Activated CD4-positive, alpha-beta memory T cell treated with anti-CD3 and anti-CD28 coated beads for 36 hours (primary cell): ENCODE measurements at regions of chr11 and their contacts with region 1.

Region 1: GRCh38 chr11:57493507-57494503 is 21.7 kb downstream of the SLC43A1 start:
- DNase-seq: peak; percentile 87
- H3K4me3 Mint-ChIP-seq: no peak overlapping the region
- H3K27ac Mint-ChIP-seq: peak overlapping the region; percentile 83
- H3K4me1 Mint-ChIP-seq: peaks cover 9% of the 10 kb centered on the region
- H3K27me3 Mint-ChIP-seq: no peaks in the 10 kb centered on the region

Region 2: GRCh38 chr11:57359896-57360690 is 133.7 kb before region 1 on chr11:
- CTCF ChIA-PET with region 1: interaction called, 11 read pairs
- POLR2A ChIA-PET with region 1: no interaction called
- intact Hi-C with region 1: no loop called
- DNase-seq: no peak
- H3K4me3 Mint-ChIP-seq: no peak overlapping the region
- H3K27ac Mint-ChIP-seq: no peak overlapping the region
- H3K4me1 Mint-ChIP-seq: no peaks in the 10 kb centered on the region
- H3K27me3 Mint-ChIP-seq: peaks cover 11% of the 10 kb centered on the region

Region 3: GRCh38 chr11:57474017-57474802 is 19.6 kb before region 1 on chr11:
- CTCF ChIA-PET with region 1: interaction called, 22 read pairs
- POLR2A ChIA-PET with region 1: no interaction called
- intact Hi-C with region 1: no loop called
- DNase-seq: peak; percentile 53
- H3K4me3 Mint-ChIP-seq: no peak overlapping the region
- H3K27ac Mint-ChIP-seq: peak overlapping the region; percentile 20
- H3K4me1 Mint-ChIP-seq: peaks cover 22% of the 10 kb centered on the region
- H3K27me3 Mint-ChIP-seq: peaks cover 11% of the 10 kb centered on the region

Region 4: DNA sequence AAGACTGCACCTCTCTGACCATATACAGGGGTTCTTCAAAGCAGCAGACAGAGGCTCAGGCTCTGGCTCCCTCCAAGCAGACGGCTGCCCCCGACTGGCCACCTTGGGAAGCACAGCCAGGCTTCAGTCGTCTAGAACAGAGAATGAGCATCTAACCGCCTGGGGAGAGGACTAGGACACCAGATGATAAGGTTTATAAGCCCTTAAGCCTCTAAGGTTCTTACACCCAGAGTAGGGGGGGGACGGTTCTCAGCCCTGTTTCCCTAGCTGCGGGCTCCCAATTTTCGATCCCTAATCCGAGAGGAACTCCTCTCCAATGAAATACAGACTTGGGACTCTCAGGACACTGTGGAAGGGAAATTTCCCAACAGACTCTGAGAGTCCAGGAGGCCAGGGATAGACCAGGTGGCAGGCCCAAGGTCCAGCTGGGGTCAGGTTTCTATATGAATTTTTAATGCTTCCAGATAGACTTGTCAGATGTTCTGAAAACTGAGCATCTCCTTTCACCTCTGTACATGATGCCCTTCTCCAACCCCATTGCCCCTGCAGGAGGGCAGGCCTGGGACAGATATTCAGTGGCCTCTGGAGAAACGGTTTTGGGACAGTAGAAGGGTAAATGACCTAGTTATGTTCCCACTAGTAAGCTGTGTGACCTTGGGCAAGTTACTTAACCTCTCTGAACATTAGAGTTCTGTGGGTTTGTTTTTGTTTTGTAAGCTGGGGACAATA is 13.2 kb before region 1 on chr11:
- CTCF ChIA-PET with region 1: interaction called, 36 read pairs
- POLR2A ChIA-PET with region 1: no interaction called
- intact Hi-C with region 1: no loop called
- DNase-seq: peak; percentile 87
- H3K4me3 Mint-ChIP-seq: no peak overlapping the region
- H3K27ac Mint-ChIP-seq: no peak overlapping the region
- H3K4me1 Mint-ChIP-seq: peaks cover 13% of the 10 kb centered on the region
- H3K27me3 Mint-ChIP-seq: peaks cover 17% of the 10 kb centered on the region

Region 5: DNA sequence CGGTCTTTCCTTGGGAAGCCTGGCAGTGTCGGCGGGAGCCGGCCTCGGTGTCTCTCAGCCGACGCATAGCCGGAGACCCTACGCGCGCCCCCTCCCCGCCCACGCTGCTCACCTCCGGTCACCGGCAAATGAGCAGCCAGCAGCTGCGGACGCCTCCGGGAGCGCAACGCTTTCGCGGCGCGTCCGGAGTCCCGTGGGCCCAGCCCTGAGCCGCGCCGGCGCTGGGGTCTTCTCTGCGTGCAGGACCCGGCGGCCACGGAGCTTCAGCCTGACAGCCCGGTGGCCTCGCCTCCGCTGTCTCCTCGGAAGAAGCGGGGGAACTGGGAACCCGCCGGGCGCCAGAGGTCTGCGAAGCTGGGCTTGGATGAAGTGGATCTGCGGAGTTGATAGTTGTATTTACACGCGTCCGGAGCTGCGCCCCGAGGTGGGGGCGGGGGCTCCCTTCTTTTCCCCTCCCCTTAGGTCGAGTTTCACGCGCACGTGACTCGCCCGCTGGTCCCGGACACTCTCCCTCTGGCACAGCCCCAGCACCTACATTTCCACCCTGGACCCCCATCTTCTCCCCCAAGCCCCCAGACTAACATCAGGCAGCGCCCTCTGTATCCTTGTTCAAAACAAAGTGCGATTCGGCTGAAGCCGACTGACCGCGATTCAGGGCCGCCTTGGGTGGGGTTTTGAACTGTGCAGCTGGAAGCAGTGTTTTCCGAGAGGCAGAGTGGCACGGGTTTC is 21.7 kb after region 1 on chr11 and contains the start of gene SLC43A1:
- CTCF ChIA-PET with region 1: interaction called, 562 read pairs
- POLR2A ChIA-PET with region 1: interaction called, 13 read pairs
- intact Hi-C with region 1: loop called (anchors 2 kb)
- DNase-seq: peak; percentile 60
- H3K4me3 Mint-ChIP-seq: peak within 1 kb of the TSS; percentile 96
- H3K27ac Mint-ChIP-seq: peak within 1 kb of the TSS; percentile 79
- H3K4me1 Mint-ChIP-seq: peaks cover 29% of the 10 kb centered on the region
- H3K27me3 Mint-ChIP-seq: no peaks in the 10 kb centered on the region
- total RNA-seq, gene SLC43A1: 23.1 to 23.3 TPM